ENCODE measurements at regions of chr10 and their contacts with region 1.

Region 1: GRCh38 chr10:32445740-32446535 is at the start of gene CCDC7:
- DNase-seq: peak; percentile 89
- H3K4me3 Mint-ChIP-seq: peak within 1 kb of the TSS; percentile 87
- H3K27ac Mint-ChIP-seq: peak within 1 kb of the TSS; percentile 95
- H3K4me1 Mint-ChIP-seq: peaks cover 19% of the 10 kb centered on the region
- H3K27me3 Mint-ChIP-seq: peaks cover 4% of the 10 kb centered on the region
- total RNA-seq, gene CCDC7: 12.7 to 15.2 TPM

Region 2: DNA sequence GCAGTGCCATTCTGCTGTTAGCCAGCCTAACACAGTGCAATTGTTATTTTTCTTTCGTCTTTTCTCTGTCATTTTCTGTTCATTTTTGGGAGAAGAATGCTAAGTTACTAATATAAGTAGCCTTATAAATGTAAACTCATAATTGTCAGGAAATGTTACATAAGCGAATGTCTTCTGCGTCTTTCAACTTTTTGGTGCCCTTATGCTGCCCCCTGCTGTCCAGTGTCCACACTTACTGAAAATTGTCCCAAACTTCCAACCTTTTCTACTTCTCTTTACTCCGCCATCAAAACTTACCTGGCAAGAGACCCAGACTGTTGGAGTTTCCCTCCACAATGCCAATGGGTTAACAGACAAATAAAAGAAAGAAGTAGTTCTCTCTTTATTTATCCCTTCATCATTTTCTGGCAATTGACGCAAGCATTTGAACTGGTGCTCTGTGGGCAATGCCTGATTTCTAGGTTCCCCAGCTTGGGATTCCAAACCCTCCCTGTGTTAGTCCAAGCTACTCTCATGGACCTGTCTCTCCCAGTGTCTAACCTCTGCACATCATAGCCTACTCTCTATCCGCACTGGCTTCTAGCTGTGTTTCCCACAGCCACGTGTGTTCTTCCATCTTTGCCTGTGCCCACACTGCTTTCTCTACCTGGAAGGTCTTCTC is 78.0 kb before region 1 on chr10:
- CTCF ChIA-PET with region 1: interaction called, 6 read pairs
- POLR2A ChIA-PET with region 1: interaction called, 10 read pairs
- DNase-seq: peak; percentile 77
- H3K4me3 Mint-ChIP-seq: no peak overlapping the region
- H3K27ac Mint-ChIP-seq: peak overlapping the region; percentile 4
- H3K4me1 Mint-ChIP-seq: peaks cover 40% of the 10 kb centered on the region
- H3K27me3 Mint-ChIP-seq: no peaks in the 10 kb centered on the region

Region 3: DNA sequence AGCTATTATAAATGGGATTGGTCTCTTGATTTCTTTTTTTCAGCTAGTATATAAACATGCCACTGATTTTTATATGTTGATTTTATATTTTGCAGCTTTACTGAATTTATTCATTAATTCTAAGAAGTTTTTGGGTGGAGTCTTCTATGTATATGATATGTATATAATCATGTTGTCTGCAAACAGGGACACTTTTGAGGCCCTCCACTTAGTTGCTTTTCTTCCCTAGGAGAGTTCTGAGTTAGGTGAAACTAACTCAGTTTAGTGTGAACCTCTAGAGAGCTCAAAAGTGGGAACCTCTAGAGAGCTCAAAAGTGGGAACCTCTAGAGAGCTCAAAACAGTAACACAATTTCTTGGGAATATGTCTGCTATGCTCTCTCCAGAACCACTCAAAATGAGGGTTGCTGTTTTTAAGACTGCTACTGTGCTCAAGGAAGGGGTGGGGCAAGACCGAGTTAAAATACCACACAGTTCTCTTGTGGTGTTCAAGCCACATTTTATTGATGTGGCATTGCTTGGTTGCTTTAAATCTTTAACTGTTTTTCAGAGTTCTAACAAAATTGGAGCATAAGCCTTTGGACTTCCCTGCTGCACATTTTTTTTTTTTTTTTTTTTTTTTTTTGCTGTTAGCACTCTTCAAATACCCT is 13.2 kb after region 1 on chr10:
- CTCF ChIA-PET with region 1: interaction called, 6 read pairs
- POLR2A ChIA-PET with region 1: interaction called, 27 read pairs
- DNase-seq: peak; percentile 52
- H3K4me3 Mint-ChIP-seq: no peak overlapping the region
- H3K27ac Mint-ChIP-seq: peak overlapping the region; percentile 61
- H3K4me1 Mint-ChIP-seq: peaks cover 26% of the 10 kb centered on the region
- H3K27me3 Mint-ChIP-seq: no peaks in the 10 kb centered on the region

Measured in activated CD4-positive, alpha-beta memory T cell treated with anti-CD3 and anti-CD28 coated beads, Interleukin-2, amount 10 ng/mL, durations not matched to agents 7 days and 5 days (primary cell).